Caco-2 (cell line): ENCODE measurements at regions of chr2 and their contacts with region 1.

Region 1: GRCh38 chr2:171160119-171160955 is at the start of gene TLK1:
- DNase-seq: peak; percentile 82
- H3K4me3 ChIP-seq: peak within 1 kb of the TSS; percentile 96
- H3K4me3 Mint-ChIP-seq: peak within 1 kb of the TSS; percentile 76
- H3K27ac Mint-ChIP-seq: peak within 1 kb of the TSS; percentile 94
- H3K4me1 ChIP-seq: peaks cover 12% of the 10 kb centered on the region
- H3K4me1 Mint-ChIP-seq: peaks cover 23% of the 10 kb centered on the region
- H3K27me3 ChIP-seq: no peaks in the 10 kb centered on the region
- H3K27me3 Mint-ChIP-seq: no peaks in the 10 kb centered on the region
- CTCF ChIP-seq: no peak
- total RNA-seq, gene TLK1: 77.7 and 85.1 TPM in 2 replicates

Region 2: GRCh38 chr2:170928824-170929685 is 231.3 kb before region 1 on chr2 and contains the start of gene GORASP2:
- CTCF ChIA-PET with region 1: no interaction called
- POLR2A ChIA-PET with region 1: interaction called, 3 read pairs
- intact Hi-C with region 1: loop called (anchors 2 kb)
- DNase-seq: peak; percentile 98 to 100
- H3K4me3 ChIP-seq: peak within 1 kb of the TSS; percentile 98
- H3K4me3 Mint-ChIP-seq: peak within 1 kb of the TSS; percentile 98
- H3K27ac Mint-ChIP-seq: peak within 1 kb of the TSS; percentile 99
- H3K4me1 ChIP-seq: peaks cover 21% of the 10 kb centered on the region
- H3K4me1 Mint-ChIP-seq: peaks cover 29% of the 10 kb centered on the region
- H3K27me3 ChIP-seq: no peaks in the 10 kb centered on the region
- H3K27me3 Mint-ChIP-seq: no peaks in the 10 kb centered on the region
- CTCF ChIP-seq: peak; percentile 87 to 91
- total RNA-seq, gene GORASP2: 124 and 143 TPM in 2 replicates

Region 3: GRCh38 chr2:170991399-170992182 is 168.7 kb before region 1 on chr2:
- CTCF ChIA-PET with region 1: no interaction called
- POLR2A ChIA-PET with region 1: no interaction called
- intact Hi-C with region 1: loop called (anchors 1 kb)
- DNase-seq: no peak
- H3K4me3 ChIP-seq: no peak overlapping the region
- H3K4me3 Mint-ChIP-seq: no peak overlapping the region
- H3K27ac Mint-ChIP-seq: no peak overlapping the region
- H3K4me1 ChIP-seq: no peaks in the 10 kb centered on the region
- H3K4me1 Mint-ChIP-seq: no peaks in the 10 kb centered on the region
- H3K27me3 ChIP-seq: no peaks in the 10 kb centered on the region
- H3K27me3 Mint-ChIP-seq: no peaks in the 10 kb centered on the region
- CTCF ChIP-seq: peak in 1 of 2 experiments; percentile 25

Region 4: GRCh38 chr2:171086352-171087290 is 73.7 kb before region 1 on chr2:
- CTCF ChIA-PET with region 1: interaction called, 3 read pairs
- POLR2A ChIA-PET with region 1: no interaction called
- intact Hi-C with region 1: loop called (anchors 5 kb)
- DNase-seq: peak; percentile 56 to 64
- H3K4me3 ChIP-seq: no peak overlapping the region
- H3K4me3 Mint-ChIP-seq: peak overlapping the region; percentile 34
- H3K27ac Mint-ChIP-seq: peak overlapping the region; percentile 6
- H3K4me1 ChIP-seq: no peaks in the 10 kb centered on the region
- H3K4me1 Mint-ChIP-seq: peaks cover 34% of the 10 kb centered on the region
- H3K27me3 ChIP-seq: no peaks in the 10 kb centered on the region
- H3K27me3 Mint-ChIP-seq: no peaks in the 10 kb centered on the region
- CTCF ChIP-seq: peak; percentile 72 to 79

Region 5: DNA sequence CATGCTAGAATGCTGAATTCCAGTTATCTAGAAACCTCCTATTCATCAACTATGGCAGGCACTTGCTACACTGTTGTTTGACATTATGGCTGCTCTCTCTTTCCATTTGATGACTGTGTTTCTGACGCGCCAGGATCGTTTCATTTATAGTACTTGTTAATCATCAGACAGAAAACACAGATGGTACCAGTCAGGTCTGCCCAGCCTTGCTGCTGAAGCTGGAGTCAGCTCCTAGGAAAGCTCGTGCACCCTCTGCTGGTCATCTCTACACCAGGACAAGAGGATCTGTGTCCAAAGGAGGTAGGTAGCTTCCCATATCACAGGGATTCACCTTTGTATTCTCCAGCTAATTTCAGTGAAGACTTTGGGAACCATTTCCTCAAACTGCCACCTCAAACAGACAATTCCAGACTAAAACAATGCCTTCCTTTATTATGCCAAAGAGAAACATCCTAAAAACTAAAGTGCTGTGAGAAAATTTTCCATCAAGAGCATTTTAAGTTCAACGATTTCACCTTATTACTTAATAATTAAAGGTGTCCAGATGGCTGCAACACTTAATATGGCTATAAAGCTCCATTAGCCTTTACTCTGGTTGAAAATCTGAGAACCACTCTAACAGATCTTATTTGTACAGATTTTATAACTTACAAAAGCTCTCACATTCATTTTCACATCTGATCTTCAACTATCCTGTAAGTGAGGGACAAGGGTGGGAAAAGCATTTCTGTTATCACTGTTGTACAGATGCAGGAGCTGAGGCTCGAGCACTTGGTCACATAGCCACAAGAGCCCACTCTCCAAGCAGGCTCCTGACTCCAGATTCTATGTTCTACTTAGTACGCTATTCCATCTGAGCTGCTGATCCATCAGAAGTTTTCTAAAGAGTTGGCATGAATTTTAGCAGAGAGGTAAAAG is 255.9 kb after region 1 on chr2:
- CTCF ChIA-PET with region 1: interaction called, 8 read pairs
- POLR2A ChIA-PET with region 1: interaction called, 13 read pairs
- intact Hi-C with region 1: loop called (anchors 1 kb)
- DNase-seq: peak; percentile 89 to 94
- H3K4me3 ChIP-seq: no peak overlapping the region
- H3K4me3 Mint-ChIP-seq: peak overlapping the region; percentile 61
- H3K27ac Mint-ChIP-seq: peak overlapping the region; percentile 63
- H3K4me1 ChIP-seq: peaks cover 3% of the 10 kb centered on the region; the same call in 1 of the 2 replicates
- H3K4me1 Mint-ChIP-seq: peaks cover 9% of the 10 kb centered on the region
- H3K27me3 ChIP-seq: no peaks in the 10 kb centered on the region
- H3K27me3 Mint-ChIP-seq: no peaks in the 10 kb centered on the region
- CTCF ChIP-seq: peak; percentile 75 to 92